Activated CD4-positive, alpha-beta memory T cell treated with anti-CD3 and anti-CD28 coated beads, Interleukin-2, amount 10 ng/mL, durations not matched to agents 7 days and 5 days (primary cell): ENCODE measurements at regions of chr12 and their contacts with region 1.

Region 1: DNA sequence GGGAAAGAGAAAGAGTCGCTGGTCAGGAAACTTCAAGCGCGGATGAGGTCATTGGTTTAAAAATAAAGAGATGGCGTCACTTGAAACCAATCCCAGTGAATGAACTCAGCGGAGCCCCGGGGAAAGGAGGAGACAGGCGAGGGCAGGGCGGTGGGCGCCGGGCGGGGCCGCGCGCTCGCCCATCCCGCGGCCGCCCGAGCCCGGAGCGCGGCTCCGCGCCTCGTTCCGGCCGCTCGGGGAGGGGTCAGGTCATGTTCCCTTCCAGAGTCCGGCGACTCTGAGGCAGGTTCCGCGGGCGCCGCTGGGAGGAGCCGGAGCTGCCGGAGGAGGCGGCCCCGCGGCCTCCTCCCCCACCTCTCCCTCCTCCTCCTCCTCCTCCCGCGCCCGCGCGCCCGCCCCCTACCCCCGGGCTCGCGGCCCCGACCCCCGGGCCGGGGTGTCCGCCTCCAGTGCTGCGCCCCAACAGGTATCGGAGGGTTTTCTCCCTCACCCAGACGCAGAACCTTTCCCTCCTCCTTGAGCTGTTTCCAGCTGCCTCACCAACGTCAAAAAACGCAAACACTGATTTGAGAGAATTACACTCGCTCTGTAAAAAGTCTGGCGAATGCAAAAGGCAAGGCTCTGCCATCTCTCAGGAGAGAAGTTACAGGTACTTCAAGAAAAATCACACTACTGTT is at the start of gene DUSP16:
- DNase-seq: peak; percentile 86
- H3K4me3 Mint-ChIP-seq: peak within 1 kb of the TSS; percentile 83
- H3K27ac Mint-ChIP-seq: peak within 1 kb of the TSS; percentile 94
- H3K4me1 Mint-ChIP-seq: peaks cover 42% of the 10 kb centered on the region
- H3K27me3 Mint-ChIP-seq: no peaks in the 10 kb centered on the region
- total RNA-seq, gene DUSP16: 77.3 to 85.2 TPM

Region 2: DNA sequence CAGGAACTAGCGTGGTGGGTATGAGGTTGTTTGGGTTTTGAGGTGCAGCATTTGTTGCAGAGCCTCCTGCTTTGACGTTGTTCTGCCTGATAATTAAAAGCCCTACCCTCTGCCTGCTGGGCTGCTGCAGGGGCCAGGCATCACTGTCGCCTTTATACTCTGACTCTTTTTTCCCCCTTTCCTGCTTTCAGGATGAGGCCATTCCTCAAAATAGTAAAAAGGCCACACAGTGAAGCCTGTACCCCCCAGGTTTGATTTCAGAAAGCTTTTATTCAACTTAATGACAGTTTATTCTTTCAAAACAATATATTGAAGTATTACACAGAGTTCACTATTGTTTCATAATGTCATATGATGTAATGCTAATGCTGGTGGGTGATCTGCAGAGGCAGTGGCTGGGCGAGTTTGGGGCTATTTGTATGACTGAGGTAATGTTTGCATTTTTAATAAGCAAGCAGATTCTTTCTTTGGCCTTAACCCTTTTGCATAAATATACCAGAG is 196.7 kb before region 1 on chr12:
- CTCF ChIA-PET with region 1: interaction called, 4 read pairs
- POLR2A ChIA-PET with region 1: interaction called, 11 read pairs
- DNase-seq: no peak
- H3K4me3 Mint-ChIP-seq: no peak overlapping the region
- H3K27ac Mint-ChIP-seq: no peak overlapping the region
- H3K4me1 Mint-ChIP-seq: peaks cover 45% of the 10 kb centered on the region
- H3K27me3 Mint-ChIP-seq: no peaks in the 10 kb centered on the region

Region 3: DNA sequence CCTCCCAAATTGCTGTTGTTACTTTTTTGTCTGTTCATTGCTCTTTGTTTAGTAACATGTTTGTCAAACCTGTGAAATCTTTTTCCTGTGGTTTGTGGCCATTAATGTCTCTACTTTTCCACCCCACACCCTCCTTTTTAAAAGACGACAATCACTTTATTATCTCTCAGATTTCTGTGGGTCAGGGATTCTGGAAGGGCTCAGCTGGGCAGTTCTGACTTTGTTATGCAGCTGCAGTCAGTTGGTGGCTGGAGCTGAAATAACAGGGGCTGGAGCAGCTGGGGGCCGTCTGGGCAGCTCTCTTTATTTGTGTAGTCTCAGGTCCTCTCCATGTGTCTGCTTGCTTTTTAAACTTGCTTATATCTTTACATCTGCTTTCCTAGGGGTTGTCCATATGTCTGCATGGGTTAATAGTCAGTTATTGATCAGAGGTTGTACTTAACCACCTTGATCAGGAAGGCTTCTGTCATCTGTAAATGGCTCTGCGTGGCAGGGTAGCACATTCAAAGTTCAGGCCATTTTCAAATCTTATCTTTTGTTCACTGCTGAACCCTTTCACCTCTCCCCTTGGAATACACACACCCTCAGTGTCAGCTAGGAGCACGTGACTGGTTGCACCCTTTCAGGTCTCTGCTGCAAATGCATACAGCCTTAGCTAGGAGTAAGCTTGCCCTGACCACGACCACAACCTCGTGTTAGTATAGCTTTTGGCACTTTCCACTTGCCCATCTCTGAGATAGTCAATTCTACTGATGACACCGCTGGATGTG is 178.0 kb before region 1 on chr12:
- CTCF ChIA-PET with region 1: interaction called, 7 read pairs
- POLR2A ChIA-PET with region 1: interaction called, 17 read pairs
- DNase-seq: peak; percentile 85
- H3K4me3 Mint-ChIP-seq: peak overlapping the region; percentile 57
- H3K27ac Mint-ChIP-seq: peak overlapping the region; percentile 97
- H3K4me1 Mint-ChIP-seq: peaks cover 83% of the 10 kb centered on the region
- H3K27me3 Mint-ChIP-seq: no peaks in the 10 kb centered on the region

Region 4: GRCh38 chr12:12467688-12468261 is 94.9 kb before region 1 on chr12:
- CTCF ChIA-PET with region 1: interaction called, 6 read pairs
- POLR2A ChIA-PET with region 1: interaction called, 52 read pairs
- DNase-seq: peak; percentile 77
- H3K4me3 Mint-ChIP-seq: peak overlapping the region; percentile 40
- H3K27ac Mint-ChIP-seq: peak overlapping the region; percentile 97
- H3K4me1 Mint-ChIP-seq: peaks cover 87% of the 10 kb centered on the region
- H3K27me3 Mint-ChIP-seq: no peaks in the 10 kb centered on the region

Region 5: GRCh38 chr12:12486661-12487240 is 76.0 kb before region 1 on chr12:
- CTCF ChIA-PET with region 1: interaction called, 8 read pairs
- POLR2A ChIA-PET with region 1: interaction called, 87 read pairs
- DNase-seq: no peak
- H3K4me3 Mint-ChIP-seq: no peak overlapping the region
- H3K27ac Mint-ChIP-seq: peak overlapping the region; percentile 77
- H3K4me1 Mint-ChIP-seq: peaks cover 66% of the 10 kb centered on the region
- H3K27me3 Mint-ChIP-seq: no peaks in the 10 kb centered on the region

Region 6: DNA sequence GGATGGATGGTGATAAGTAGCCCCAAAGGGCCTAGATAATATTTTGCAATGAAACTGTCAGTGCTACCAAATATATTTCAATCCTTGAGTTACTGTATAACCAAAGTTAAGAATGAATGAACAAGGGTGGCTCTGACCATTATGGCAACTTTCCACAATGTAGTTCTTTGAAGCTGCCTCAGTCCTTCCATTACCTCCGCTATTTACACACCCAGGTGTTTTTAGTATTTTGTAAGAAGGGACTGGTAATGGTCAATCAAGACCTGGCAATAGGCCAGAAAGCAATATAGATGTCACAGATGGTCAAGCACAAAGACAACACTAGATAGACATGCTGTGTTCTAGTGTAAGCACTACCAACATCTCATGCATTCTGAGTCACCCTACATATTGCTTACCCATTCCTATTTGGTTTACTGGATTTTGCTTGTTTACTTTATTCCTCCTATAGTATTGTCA is 16.4 kb before region 1 on chr12:
- CTCF ChIA-PET with region 1: interaction called, 5 read pairs
- POLR2A ChIA-PET with region 1: interaction called, 10 read pairs
- DNase-seq: no peak
- H3K4me3 Mint-ChIP-seq: no peak overlapping the region
- H3K27ac Mint-ChIP-seq: no peak overlapping the region
- H3K4me1 Mint-ChIP-seq: peaks cover 43% of the 10 kb centered on the region
- H3K27me3 Mint-ChIP-seq: no peaks in the 10 kb centered on the region

Region 7: DNA sequence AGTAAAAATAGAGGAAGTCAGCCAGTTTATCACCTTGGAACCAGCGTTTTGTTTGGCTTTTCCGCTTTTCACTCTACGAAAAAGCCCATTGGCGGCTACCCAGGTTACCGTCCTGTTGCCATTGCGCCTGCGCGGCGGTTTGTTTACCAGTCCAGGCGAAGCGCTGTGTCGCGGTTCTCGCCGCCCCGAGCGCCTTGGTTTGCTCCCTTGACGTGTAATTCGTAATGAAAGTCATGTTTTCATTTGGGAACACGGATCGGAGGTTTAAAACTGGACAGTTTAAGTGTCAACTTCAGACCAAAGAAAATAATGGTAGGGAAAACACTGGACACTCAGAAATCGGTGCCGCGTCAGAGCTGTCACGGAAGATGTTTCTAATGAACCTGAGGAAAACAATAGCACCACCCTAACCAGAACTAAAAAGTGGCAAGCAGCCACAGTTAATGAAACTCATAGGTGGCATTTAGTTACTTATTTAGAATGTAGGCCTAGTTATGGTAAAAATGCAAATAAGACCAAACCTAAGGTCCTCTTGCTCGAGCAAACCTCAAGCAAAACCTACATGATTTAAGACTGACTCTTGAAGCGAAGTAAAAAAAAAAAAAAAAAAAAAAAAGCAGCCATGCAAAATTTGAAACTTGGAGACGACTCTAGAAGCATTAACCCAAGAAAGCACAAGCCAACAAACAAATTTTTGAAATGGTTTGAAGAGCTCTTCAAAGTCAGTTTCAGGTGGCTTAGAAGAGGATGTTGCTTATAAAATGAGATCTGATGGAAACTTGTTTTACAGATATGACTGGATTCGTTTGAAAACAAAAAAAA is 134.1 kb after region 1 on chr12:
- CTCF ChIA-PET with region 1: interaction called, 5 read pairs
- POLR2A ChIA-PET with region 1: interaction called, 15 read pairs
- DNase-seq: peak; percentile 93
- H3K4me3 Mint-ChIP-seq: peak overlapping the region; percentile 83
- H3K27ac Mint-ChIP-seq: peak overlapping the region; percentile 100
- H3K4me1 Mint-ChIP-seq: peaks cover 63% of the 10 kb centered on the region
- H3K27me3 Mint-ChIP-seq: no peaks in the 10 kb centered on the region